HepG2 (cell line): ENCODE measurements at regions of chr4 and their contacts with region 1.

Region 1: GRCh38 chr4:136927172-136927571 is 605.1 kb downstream of the PCDH18 start:
- DNase-seq: no peak
- ATAC-seq: no peak
- H3K4me3 ChIP-seq: no peak overlapping the region
- H3K27ac ChIP-seq: no peak overlapping the region
- H3K4me1 ChIP-seq: no peaks in the 10 kb centered on the region
- H3K27me3 ChIP-seq: no peaks in the 10 kb centered on the region
- CTCF ChIP-seq: no peak
- EP300 ChIP-seq: no peak
- POLR2A ChIP-seq: no peak
- RAD21 ChIP-seq: no peak

Region 2: GRCh38 chr4:138927072-138927471 is 1999.9 kb after region 1 on chr4:
- CTCF ChIA-PET with region 1: no interaction called
- POLR2A ChIA-PET with region 1: no interaction called
- in situ Hi-C with region 1: no loop called
- intact Hi-C with region 1: loop called (anchors 10 kb)
- DNase-seq: no peak
- ATAC-seq: no peak
- H3K4me3 ChIP-seq: no peak overlapping the region
- H3K27ac ChIP-seq: no peak overlapping the region
- H3K4me1 ChIP-seq: no peaks in the 10 kb centered on the region
- H3K27me3 ChIP-seq: no peaks in the 10 kb centered on the region
- CTCF ChIP-seq: no peak
- EP300 ChIP-seq: no peak
- POLR2A ChIP-seq: no peak
- RAD21 ChIP-seq: no peak